IMR-90 (cell line): ENCODE measurements at regions of chr10 and their contacts with region 1.

Region 1: GRCh38 chr10:74328388-74328787 is 177.4 kb downstream of the ADK start:
- DNase-seq: no peak
- ATAC-seq: no peak
- H3K4me3 ChIP-seq: no peak overlapping the region
- H3K27ac ChIP-seq: no peak overlapping the region
- H3K4me1 ChIP-seq: no peaks in the 10 kb centered on the region
- H3K27me3 ChIP-seq: no peaks in the 10 kb centered on the region
- CTCF ChIP-seq: no peak
- POLR2A ChIP-seq: no peak
- RAD21 ChIP-seq: no peak

Region 2: DNA sequence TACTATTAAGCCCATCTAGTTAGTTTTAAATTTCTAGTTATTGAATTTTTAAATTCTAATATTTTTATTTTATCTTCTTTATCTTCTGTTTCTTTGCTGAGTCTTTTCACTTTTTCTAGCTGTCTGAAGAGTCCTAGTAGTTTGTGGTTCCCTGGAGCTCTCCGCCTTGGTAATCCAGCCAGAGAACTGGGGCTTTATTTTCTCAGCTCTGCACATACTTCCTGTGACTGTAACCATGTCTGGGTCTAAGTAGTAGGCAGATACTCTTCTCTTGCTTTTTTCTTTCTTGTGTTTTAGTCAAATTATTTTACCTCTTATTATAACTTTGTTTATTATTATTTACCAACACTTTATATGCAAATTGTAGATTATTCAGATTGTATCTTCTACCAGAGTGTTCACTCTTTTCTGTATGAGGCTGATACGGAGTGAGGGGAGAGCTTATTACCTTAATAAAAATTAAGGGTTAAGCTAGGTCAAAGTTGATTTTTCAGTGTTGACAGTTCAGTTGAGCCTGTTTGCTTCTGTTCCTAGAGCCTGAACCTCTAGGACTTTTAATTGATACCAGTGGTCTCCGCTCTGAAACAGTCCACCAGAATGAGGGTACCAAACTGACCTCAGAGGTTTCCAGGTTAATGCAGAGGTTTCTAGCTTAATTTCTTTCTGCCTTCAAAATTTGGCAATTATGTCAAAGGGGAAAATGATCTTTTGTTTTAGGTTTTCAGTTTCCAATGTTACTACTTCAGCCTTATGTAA is 22.0 kb before region 1 on chr10:
- CTCF ChIA-PET with region 1: no interaction called
- POLR2A ChIA-PET with region 1: interaction called, 11 read pairs
- dilution Hi-C with region 1: no loop called
- in situ Hi-C with region 1: no loop called
- intact Hi-C with region 1: no loop called
- DNase-seq: no peak
- ATAC-seq: no peak
- H3K4me3 ChIP-seq: no peak overlapping the region
- H3K27ac ChIP-seq: no peak overlapping the region
- H3K4me1 ChIP-seq: no peaks in the 10 kb centered on the region; the same call in none of the 2 replicates
- H3K27me3 ChIP-seq: no peaks in the 10 kb centered on the region
- CTCF ChIP-seq: no peak
- POLR2A ChIP-seq: no peak
- RAD21 ChIP-seq: no peak

Region 3: GRCh38 chr10:74406006-74406405 is 77.6 kb after region 1 on chr10:
- CTCF ChIA-PET with region 1: no interaction called
- POLR2A ChIA-PET with region 1: no interaction called
- dilution Hi-C with region 1: no loop called
- in situ Hi-C with region 1: no loop called
- intact Hi-C with region 1: no loop called
- DNase-seq: no peak
- ATAC-seq: no peak
- H3K4me3 ChIP-seq: no peak overlapping the region
- H3K27ac ChIP-seq: no peak overlapping the region
- H3K4me1 ChIP-seq: no peaks in the 10 kb centered on the region
- H3K27me3 ChIP-seq: no peaks in the 10 kb centered on the region
- CTCF ChIP-seq: no peak
- POLR2A ChIP-seq: no peak
- RAD21 ChIP-seq: no peak